Activated CD8-positive, alpha-beta memory T cell treated with anti-CD3 and anti-CD28 coated beads, Interleukin-2, amount 10 ng/mL, durations not matched to agents 7 days and 5 days (primary cell): ENCODE measurements at regions of chr22 and their contacts with region 1.

Region 1: DNA sequence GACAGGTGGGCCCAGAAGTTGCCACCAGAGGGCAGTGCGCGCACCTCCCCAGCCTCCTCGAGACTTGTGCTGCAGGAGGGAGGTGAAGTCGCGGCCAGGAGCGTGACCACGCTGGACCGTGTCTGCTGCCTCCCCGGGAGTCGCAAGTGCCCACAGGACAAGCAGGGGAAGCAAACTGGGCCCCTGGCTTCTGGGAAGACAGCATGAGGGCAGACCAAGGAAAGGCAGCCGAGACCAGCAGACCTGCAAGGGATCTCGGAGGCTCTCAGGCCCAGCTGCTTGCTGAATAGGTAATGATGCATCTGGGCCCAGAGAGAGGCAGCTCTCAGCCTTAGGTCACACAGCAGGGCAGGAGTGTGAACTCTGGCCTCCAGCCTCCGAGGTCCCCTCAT is 17.0 kb upstream of the IL2RB start:
- DNase-seq: peak; percentile 93
- ATAC-seq: peak; percentile 29
- H3K4me3 Mint-ChIP-seq: peak overlapping the region; percentile 78
- H3K27ac Mint-ChIP-seq: peak overlapping the region; percentile 99
- H3K4me1 Mint-ChIP-seq: peaks cover 93% of the 10 kb centered on the region
- H3K27me3 Mint-ChIP-seq: no peaks in the 10 kb centered on the region

Region 2: GRCh38 chr22:37077884-37078485 is 88.7 kb before region 1 on chr22:
- CTCF ChIA-PET with region 1: interaction called, 10 read pairs
- DNase-seq: peak; percentile 90
- ATAC-seq: peak; percentile 16
- H3K4me3 Mint-ChIP-seq: peak overlapping the region; percentile 32
- H3K27ac Mint-ChIP-seq: peak overlapping the region; percentile 99
- H3K4me1 Mint-ChIP-seq: peaks cover 69% of the 10 kb centered on the region
- H3K27me3 Mint-ChIP-seq: no peaks in the 10 kb centered on the region

Region 3: DNA sequence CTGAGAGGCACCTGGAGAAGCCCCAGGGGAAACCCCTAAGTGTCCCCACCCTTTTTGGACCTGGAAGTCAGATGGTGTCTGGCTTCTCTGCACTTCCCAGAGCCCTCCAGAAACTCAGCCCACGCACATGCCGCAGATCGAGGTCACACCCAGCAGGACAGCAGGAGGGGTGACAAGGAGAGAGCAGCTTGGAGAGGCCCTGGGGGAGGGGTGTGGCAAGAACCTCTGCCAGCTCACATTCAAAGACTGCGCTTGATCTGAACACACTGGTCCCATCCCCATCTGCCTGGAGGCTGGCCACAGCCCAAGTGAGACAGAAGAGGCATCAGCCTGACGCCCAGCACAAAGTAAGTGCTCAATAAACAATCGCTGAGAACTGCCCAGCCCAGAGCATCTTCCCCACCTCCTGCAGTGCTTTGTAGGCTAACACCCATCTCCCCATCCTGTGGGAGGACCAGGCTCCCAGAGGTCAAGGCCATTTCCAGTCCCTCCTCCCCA is 78.5 kb before region 1 on chr22:
- CTCF ChIA-PET with region 1: no interaction called
- DNase-seq: no peak
- ATAC-seq: no peak
- H3K4me3 Mint-ChIP-seq: peak overlapping the region; percentile 21
- H3K27ac Mint-ChIP-seq: no peak overlapping the region
- H3K4me1 Mint-ChIP-seq: peaks cover 28% of the 10 kb centered on the region
- H3K27me3 Mint-ChIP-seq: no peaks in the 10 kb centered on the region

Region 4: GRCh38 chr22:37121887-37122591 is 44.6 kb before region 1 on chr22:
- CTCF ChIA-PET with region 1: interaction called, 16 read pairs
- DNase-seq: peak; percentile 98
- ATAC-seq: peak; percentile 97
- H3K4me3 Mint-ChIP-seq: peak overlapping the region; percentile 70
- H3K27ac Mint-ChIP-seq: peak overlapping the region; percentile 99
- H3K4me1 Mint-ChIP-seq: peaks cover 72% of the 10 kb centered on the region
- H3K27me3 Mint-ChIP-seq: no peaks in the 10 kb centered on the region

Region 5: DNA sequence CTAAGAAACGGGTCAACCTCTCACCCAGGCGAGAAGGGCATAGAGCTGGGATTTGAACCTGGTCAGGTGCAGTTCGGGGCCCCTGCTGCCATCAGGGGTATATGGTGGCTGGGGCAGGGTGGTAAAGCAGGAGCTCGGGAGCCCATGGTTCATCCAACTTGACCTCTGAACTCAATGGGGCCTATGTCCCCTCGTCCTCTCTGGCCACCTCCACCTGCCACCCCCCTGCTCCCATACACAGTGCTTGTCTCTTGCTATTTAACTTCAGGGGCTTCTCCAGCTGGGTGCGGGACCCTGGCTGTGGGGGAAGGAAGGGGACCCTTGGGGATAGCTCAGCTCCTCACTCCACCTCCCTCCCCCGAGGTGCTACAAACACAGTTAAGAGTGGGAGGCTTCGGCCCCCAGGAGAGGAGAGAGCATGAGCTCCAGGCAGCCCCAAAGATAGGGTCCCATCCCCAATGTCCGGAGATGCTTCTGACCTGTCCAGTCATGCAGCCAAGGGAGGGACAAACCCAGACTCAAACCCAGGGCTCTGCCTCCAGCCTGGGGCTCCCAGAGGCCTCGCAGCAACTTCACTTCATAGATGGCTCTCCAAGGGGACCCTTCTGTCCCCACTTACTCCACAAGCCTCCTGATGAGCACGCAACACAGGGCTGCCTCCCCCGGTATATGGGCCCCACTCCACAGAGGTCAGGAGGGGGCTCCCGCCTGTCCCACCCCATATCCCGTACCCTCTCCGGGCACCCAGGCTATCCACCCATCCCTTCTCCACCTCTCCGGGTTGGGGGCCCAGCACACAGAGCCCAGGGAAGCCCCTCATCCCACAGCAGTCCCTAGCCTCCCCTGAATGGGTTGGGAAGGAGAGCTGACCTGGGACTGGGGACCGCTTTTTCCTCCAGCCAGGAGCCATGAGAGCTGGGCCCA is 17.7 kb before region 1 on chr22:
- CTCF ChIA-PET with region 1: interaction called, 107 read pairs
- DNase-seq: no peak
- ATAC-seq: no peak
- H3K4me3 Mint-ChIP-seq: peak overlapping the region; percentile 100
- H3K27ac Mint-ChIP-seq: peak overlapping the region; percentile 99
- H3K4me1 Mint-ChIP-seq: peaks cover 57% of the 10 kb centered on the region
- H3K27me3 Mint-ChIP-seq: no peaks in the 10 kb centered on the region

Region 6: GRCh38 chr22:37186228-37186996 is 19.7 kb after region 1 on chr22:
- CTCF ChIA-PET with region 1: interaction called, 33 read pairs
- DNase-seq: peak; percentile 73
- ATAC-seq: peak; percentile 87
- H3K4me3 Mint-ChIP-seq: peak overlapping the region; percentile 56
- H3K27ac Mint-ChIP-seq: peak overlapping the region; percentile 79
- H3K4me1 Mint-ChIP-seq: peaks cover 66% of the 10 kb centered on the region
- H3K27me3 Mint-ChIP-seq: no peaks in the 10 kb centered on the region

Region 7: DNA sequence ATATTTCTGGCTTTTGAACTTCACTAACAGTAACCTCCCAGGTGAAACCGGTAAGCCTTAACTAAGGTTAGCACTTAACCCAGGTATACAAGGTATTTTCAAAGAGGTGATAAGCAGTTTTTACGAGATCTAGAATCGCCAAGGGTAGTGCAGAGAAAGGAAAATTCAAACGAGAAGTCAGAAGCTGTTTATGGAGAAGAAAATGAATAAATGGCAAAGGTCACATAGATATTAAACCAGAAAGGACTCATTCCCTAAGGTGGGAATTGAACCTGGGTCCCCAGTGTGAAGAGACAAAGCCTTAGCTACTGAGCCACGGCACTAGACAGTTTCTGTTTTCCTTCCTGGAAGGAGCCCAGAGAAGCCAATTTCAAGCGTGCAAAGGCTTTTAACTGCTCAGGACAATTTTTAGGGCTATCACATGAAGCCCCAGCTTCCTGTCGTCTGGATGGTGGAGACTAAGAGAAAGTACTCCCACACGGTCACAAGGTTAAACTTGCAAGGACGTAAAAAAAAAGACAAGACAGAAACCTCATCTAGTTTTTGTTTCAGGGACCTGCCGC is 27.0 kb after region 1 on chr22:
- CTCF ChIA-PET with region 1: interaction called, 150 read pairs
- DNase-seq: peak; percentile 70
- ATAC-seq: peak; percentile 27
- H3K4me3 Mint-ChIP-seq: peak overlapping the region; percentile 39
- H3K27ac Mint-ChIP-seq: peak overlapping the region; percentile 82
- H3K4me1 Mint-ChIP-seq: peaks cover 47% of the 10 kb centered on the region
- H3K27me3 Mint-ChIP-seq: no peaks in the 10 kb centered on the region

Region 8: DNA sequence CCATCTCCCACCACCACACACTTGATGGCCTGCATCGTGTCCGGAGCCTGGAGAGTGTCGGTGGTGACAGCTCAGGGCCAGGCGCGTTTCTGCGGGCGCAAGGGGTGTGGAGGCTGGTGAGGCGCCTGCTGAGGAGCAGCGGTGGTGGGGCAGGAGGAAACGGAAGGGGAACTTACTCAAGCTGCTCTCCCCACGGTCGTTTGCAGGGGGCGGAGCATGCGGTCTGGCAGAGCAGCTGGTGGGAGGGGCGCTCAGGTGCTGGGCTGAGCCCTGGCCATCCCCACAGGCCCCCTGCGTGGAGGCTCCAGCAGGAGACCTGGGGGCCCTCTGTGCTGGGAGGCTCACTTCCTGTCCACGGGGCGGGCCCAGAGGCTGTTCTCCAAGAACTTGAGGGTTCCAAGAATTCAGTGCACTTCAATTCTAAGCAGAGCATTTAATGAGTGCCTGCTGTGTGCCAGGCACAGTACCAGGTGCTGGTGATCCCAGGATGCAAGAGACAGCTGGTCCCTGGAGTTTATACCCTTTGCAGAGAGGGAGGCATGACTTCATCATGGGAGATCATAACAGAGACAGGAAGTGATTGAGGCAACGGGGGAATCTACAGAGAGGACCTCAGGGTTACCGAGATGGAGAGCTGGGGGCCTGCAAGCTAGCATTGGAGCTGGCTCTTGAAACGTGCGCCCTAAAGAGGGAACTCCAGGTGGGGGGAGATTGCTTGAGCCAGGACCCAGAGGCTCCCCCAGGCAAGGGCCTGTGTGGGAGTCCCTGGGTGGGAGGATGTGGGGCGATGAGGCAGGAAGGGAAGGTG is 77.6 kb after region 1 on chr22 and contains the start of gene RAC2:
- CTCF ChIA-PET with region 1: interaction called, 16 read pairs
- DNase-seq: peak; percentile 97
- ATAC-seq: peak; percentile 60
- H3K4me3 Mint-ChIP-seq: peak within 1 kb of the TSS; percentile 100
- H3K27ac Mint-ChIP-seq: peak within 1 kb of the TSS; percentile 98
- H3K4me1 Mint-ChIP-seq: peaks cover 49% of the 10 kb centered on the region
- H3K27me3 Mint-ChIP-seq: no peaks in the 10 kb centered on the region
- total RNA-seq, gene RAC2: 834 to 907 TPM